HEK293 (cell line): ENCODE measurements at regions of chr1 and their contacts with region 1.

Region 1: DNA sequence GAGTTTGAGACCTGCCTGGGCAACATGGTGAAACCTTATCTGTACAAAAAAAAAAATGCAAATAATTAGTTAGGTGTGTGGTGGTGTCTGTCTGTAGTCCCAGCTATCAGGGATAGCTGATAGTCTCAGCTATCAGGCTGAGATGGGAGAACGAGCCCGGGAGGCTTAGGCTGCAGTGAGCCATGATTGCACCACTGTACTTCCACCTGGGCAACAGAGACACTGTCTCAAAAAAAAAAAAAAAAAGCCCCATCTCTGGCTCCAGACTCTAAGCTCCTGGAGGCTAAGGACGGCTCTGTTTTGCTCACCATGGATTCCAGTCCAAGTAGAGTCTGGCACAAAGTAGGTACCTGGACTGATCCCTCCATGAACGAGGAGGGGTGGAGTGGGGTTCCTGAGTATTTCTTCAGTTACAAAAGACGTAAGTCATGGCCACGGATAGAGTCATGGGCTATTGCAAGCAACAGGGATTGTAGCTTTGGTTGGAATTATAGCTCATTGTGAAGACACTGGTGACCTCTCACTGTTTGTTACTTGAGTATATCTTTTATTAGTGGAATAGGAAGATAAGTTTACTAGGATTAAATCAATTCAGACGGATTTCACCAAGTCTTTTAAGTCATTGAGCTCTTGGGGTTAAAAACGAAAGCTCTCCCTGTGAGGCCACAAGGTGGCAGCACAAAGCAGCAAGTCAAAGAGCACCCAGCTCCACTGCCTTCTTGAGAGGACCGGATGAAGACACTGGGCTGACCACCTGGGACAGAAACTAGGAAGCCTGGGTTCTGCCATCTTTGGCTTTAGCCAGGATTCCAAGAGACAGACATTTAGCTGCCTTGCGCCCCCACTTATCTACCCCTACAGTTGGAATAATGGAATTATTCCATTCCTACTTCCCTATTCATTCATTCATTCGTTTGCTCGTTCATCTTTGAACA is 35.6 kb upstream of the TMEM61 start:
- H3K4me3 ChIP-seq: no peak overlapping the region
- H3K27ac ChIP-seq: no peak overlapping the region
- H3K4me1 ChIP-seq: no peaks in the 10 kb centered on the region
- CTCF ChIP-seq: peak; percentile 41

Region 2: DNA sequence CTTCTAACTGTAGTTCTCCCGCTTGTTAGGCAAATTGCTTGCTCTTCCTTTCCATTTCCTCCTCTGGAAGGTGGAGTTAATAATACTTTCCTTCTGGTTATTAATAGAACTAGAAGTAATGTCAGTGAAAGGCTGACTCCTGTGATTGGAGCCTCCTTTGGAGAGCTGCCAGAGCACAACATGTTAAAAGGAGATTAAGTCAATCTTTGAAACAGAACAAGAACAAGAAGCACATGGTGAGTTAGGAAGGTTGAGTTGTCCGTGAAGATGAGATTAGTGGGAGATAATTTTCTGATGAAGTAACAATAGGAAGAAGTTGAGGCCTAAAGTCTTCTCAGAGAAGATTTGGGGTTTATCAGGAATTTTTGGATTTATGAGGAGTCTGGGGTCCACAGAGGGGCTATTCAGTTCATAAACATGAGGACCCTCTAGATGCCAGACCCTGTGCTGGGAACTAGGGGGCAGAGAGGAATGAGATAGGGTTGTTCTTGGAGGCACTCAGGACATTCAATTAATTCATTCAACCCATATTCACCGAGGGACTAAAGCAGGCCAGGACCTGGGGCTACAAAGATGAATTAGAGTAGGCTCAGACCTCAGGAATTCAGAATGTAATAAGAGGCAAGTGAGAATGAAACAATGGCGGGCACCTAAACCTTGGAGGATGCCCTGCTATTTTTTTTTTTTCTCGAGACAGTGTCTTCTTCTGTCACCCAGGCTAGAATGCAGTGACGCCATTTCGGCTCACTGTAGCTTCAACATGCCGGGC is 17.2 kb before region 1 on chr1:
- CTCF ChIA-PET with region 1: interaction called, 35 read pairs
- POLR2A ChIA-PET with region 1: no interaction called
- H3K4me3 ChIP-seq: no peak overlapping the region
- H3K27ac ChIP-seq: no peak overlapping the region
- H3K4me1 ChIP-seq: no peaks in the 10 kb centered on the region
- CTCF ChIP-seq: no peak

Region 3: DNA sequence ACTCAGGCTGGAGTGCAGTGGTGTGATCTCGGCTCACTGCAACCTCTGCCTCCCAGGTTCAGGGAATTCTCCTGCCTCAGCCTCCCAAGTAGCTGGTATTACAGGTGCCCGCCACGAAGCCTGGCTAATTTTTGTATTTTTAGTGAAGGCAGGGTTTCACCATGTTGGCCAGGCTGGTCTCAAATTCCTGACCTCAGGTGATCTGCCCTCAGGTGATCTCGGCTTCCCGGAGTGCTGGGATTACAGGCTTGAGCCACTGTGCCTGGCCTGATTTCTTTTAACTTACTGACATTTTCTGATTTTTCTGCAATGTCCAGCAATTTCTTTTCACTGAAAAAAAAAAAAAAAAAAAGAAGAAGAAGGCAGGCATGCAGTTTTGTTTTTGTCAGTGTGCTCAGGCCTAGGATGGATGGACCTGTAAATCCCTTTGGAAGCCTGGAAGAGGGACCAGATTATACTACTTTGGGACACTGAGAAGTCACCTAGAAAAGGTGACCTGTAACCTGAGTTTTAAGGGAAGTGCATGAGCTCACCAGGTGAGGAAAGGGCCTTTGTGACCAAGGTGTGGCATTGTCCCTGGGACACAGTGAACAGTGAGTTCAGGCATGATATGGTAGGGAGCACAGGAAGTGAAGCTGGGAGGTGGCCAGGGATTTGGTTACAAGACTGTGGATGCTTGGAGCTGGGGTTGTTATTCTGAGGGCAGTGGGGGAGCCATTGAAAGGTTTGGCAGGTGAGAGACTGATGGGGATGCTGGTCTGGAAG is 32.8 kb after region 1 on chr1:
- CTCF ChIA-PET with region 1: interaction called, 16 read pairs
- POLR2A ChIA-PET with region 1: interaction called, 3 read pairs
- H3K4me3 ChIP-seq: no peak overlapping the region
- H3K27ac ChIP-seq: no peak overlapping the region
- H3K4me1 ChIP-seq: no peaks in the 10 kb centered on the region; the same call in 1 of the 2 replicates
- CTCF ChIP-seq: no peak

Region 4: DNA sequence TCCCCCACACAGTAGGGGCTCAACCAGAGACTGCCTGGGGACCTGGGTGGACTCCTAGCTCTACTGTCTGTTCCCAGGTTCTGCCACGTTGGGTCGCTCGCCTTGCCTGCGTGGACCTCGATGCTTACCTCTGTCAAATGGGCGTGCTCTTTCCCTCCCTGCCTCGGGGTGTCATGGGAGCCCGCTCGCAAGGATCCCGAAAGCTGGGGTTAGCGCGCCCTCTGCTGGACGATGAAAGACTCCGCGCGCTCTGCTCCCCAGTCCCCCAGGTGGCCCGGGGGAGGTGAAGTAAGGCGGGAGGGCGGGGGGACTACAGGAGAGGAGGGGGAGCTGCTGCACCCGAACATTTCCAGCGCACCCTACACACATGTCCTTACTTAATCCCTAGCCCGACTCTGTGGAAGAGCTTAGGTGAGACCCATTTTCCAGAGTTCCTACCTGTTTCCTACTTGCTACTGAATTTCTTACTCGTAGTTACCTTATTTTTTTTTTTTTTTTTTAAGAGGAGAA is 51.5 kb after region 1 on chr1:
- CTCF ChIA-PET with region 1: interaction called, 172 read pairs
- POLR2A ChIA-PET with region 1: interaction called, 6 read pairs
- H3K4me3 ChIP-seq: no peak overlapping the region
- H3K27ac ChIP-seq: no peak overlapping the region
- H3K4me1 ChIP-seq: no peaks in the 10 kb centered on the region
- CTCF ChIP-seq: peak; percentile 84

Region 5: DNA sequence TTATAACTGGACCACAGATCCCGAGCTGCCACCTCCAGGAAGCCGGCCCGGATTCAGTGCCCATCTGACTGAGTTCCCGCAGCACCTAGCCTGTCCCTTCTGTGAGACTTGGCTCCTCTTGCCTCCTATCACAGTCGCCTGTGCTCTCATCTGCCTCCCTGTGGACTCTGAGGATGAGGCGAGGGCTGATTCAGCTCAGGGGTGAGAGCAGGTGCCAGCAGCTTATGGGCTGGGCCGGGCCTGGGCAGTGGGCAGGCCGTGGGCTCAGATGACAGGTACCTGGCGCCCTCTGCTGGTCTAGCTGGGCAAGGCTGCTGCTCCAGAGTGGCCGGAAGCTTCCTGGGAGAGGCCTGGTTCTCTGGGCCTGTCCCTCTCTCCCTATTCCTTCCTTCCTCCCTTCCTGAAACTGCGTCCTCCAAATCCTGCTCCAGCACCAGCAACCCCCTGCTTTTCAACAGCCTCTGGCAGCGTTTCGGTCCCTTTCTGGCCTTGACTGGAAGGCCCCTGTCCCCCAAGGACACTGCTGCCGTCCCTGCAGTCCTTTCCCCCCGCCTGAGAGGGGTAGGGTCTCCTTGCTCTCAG is 77.2 kb after region 1 on chr1:
- CTCF ChIA-PET with region 1: interaction called, 66 read pairs
- POLR2A ChIA-PET with region 1: interaction called, 3 read pairs
- H3K4me3 ChIP-seq: no peak overlapping the region
- H3K27ac ChIP-seq: no peak overlapping the region
- H3K4me1 ChIP-seq: no peaks in the 10 kb centered on the region
- CTCF ChIP-seq: peak; percentile 98